ENCODE measurements at regions of chr19 and their contacts with region 1.

Region 1: DNA sequence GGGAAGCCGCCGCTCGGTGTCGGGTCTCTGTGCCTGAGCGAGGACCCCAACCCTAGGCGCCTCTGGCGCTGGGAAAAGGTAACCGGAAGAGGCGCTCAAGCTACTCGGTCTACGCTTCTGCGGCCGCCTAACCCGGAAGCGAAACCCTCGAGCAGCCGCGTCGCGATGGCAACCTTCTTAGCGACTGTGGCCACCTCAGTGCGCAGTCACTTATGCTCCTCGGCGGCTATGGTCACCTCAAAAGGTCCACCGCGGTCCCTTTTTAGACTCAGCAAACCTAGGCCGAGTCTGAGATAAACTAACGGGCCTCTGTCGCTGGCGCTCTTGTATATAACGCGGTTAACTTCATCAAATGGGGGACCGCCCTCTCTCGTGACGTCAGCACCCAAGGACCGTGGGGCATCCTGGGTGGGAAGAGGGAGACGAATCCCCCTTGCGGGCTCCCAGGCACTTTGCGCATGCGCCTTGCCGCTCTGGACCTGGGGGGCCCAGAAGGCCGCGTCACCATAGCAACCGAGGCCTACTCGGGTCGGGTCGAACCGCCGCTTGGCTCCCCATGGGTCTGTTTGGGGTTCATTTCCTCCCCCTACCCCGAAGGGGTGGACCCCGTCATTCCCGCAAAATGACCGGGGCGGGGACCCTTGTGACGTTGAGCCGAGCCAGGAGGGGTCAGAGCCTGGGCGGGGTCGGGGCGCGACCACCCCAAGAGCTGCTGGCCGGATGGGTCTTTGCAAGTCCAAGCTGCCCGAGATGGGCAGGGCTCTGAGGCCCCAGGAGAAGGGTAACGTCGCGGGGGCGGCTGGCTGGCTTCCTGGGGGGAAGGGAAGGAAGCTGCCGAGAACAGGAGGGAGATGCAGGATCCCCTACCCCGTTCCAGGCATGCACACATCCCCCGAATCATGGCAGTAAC is at the start of gene GTF2F1:
- DNase-seq: peak; percentile 87
- H3K4me3 Mint-ChIP-seq: peak within 1 kb of the TSS; percentile 98
- H3K27ac Mint-ChIP-seq: peak within 1 kb of the TSS; percentile 97
- H3K4me1 Mint-ChIP-seq: peaks cover 29% of the 10 kb centered on the region
- H3K27me3 Mint-ChIP-seq: no peaks in the 10 kb centered on the region
- total RNA-seq, gene GTF2F1: 62.9 and 65.5 TPM in 2 replicates

Region 2: DNA sequence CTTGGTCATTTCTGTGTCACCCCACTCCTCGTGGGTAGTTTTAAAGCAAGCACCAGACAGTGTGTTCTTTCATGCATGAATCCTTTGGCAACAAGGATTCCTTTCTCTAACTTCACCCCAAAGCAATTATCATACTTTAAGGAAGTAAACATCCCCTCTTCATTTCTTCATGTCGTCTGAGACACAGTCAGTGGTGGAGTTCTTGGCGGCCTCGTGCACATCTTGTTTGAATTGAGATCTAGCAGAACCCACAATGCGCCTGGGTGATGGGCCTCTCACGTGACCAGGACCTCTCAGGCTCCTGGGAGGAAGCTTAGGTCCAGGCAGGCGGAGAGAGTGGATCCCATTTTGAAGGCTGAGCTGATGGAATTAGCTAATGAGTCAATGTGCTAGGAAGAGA is 255.3 kb before region 1 on chr19:
- intact Hi-C with region 1: no loop called
- DNase-seq: no peak
- H3K4me3 Mint-ChIP-seq: no peak overlapping the region
- H3K27ac Mint-ChIP-seq: no peak overlapping the region
- H3K4me1 Mint-ChIP-seq: no peaks in the 10 kb centered on the region
- H3K27me3 Mint-ChIP-seq: no peaks in the 10 kb centered on the region

Region 3: DNA sequence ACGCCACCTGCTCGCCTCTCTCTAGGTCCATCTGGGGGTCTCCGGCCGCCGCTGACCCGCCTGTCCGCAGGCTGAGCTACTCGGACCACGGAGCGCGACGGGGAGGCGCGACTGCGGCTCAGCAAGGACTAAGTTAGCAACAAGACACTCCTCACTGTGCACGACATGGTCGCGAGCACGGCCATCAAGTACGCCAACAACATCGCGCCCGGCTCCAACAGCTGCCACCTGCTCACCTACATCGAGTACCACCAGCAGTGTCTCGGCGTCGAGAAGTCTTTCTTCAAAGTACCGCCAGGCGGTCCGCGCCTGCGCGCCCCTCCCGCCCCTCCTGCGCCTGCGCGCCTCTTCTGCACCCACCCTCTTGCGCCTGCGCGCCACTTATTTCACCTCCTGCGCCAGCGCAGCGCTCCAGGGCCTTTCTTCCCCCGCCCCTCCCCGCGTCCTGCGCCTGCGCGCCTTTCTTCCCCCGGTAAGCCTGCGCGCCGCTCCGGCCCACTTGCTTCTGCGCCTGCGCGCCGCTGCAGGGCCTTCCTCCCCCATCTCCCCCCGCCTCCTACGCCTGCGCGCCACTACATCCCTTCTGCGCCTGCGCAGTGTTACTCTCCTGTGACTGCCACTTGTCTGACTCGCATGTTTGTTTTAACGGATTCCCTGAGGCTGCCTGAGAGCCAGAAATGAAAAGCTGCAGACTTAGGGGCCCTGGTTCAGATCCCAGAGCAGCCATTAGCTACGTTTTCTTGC is 193.9 kb before region 1 on chr19:
- intact Hi-C with region 1: loop called (anchors 1 kb)
- DNase-seq: peak; percentile 99
- H3K4me3 Mint-ChIP-seq: peak overlapping the region; percentile 99
- H3K27ac Mint-ChIP-seq: peak overlapping the region; percentile 94
- H3K4me1 Mint-ChIP-seq: peaks cover 22% of the 10 kb centered on the region
- H3K27me3 Mint-ChIP-seq: peaks cover 2% of the 10 kb centered on the region

Region 4: DNA sequence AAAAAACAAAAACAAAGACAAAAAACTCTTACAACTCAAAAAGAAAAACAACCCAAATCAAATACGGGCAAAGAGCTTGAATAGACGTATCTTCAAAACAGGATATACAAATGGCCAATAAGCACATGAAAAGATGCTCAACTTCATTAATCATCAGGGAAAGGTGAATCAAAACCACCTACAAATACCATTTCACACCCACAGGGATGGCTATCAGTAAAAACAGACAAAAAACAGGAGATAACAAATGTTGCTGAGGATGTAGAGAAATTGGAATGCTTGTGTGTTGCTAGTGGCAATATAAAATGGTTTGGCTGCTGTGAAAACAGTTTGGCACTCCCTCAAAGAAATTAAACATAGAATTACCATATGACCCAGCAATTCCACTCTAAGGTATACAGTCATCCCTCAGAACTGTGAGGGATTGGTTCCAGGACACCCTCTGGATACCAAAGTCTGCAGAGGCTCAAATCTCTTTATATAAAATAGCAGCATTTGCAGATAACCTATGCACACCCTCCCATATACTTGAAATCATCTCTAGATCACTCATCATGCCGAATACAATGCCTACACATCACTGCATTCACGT is 143.2 kb before region 1 on chr19:
- intact Hi-C with region 1: no loop called
- DNase-seq: no peak
- H3K4me3 Mint-ChIP-seq: no peak overlapping the region
- H3K27ac Mint-ChIP-seq: peak overlapping the region; percentile 36
- H3K4me1 Mint-ChIP-seq: peaks cover 38% of the 10 kb centered on the region
- H3K27me3 Mint-ChIP-seq: no peaks in the 10 kb centered on the region